Activated naive CD8-positive, alpha-beta T cell treated with anti-CD3 and anti-CD28 coated beads, Interleukin-2, amount 10 ng/mL, durations not matched to agents 7 days and 5 days (primary cell): ENCODE measurements at regions of chr10 and their contacts with region 1.

Region 1: DNA sequence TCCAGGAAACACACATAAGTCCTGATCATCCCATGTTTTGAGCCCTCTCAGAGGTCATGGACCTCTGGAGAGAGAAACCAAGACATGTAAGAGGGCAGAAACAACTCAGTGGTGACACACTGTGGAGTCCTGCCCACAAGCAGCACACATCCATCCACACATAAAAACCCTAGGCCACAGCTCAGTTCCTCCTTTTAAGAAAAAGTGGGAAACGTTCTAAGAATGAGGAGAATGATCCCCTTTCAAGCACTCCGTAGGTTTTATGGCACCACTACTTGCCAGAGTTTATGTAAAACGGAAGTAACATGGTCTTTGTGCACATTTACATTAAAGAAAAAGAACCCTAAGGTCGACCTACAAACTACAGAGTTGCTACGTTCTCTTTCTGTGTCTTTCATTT is 19.9 kb downstream of the ATAD1 start:
- DNase-seq: no peak
- ATAC-seq: no peak
- H3K4me3 Mint-ChIP-seq: no peak overlapping the region
- H3K27ac Mint-ChIP-seq: peak overlapping the region; percentile 11
- H3K4me1 Mint-ChIP-seq: peaks cover 18% of the 10 kb centered on the region
- H3K27me3 Mint-ChIP-seq: no peaks in the 10 kb centered on the region

Region 2: GRCh38 chr10:87733081-87733480 is 65.0 kb before region 1 on chr10:
- POLR2A ChIA-PET with region 1: no interaction called
- DNase-seq: no peak
- ATAC-seq: no peak
- H3K4me3 Mint-ChIP-seq: no peak overlapping the region
- H3K27ac Mint-ChIP-seq: no peak overlapping the region
- H3K4me1 Mint-ChIP-seq: peaks cover 6% of the 10 kb centered on the region
- H3K27me3 Mint-ChIP-seq: peaks cover 37% of the 10 kb centered on the region

Region 3: GRCh38 chr10:87817609-87818504 is 19.8 kb after region 1 on chr10 and contains the start of gene ATAD1:
- POLR2A ChIA-PET with region 1: interaction called, 11 read pairs
- DNase-seq: peak; percentile 92
- ATAC-seq: peak; percentile 93
- H3K4me3 Mint-ChIP-seq: peak within 1 kb of the TSS; percentile 89
- H3K27ac Mint-ChIP-seq: peak within 1 kb of the TSS; percentile 95
- H3K4me1 Mint-ChIP-seq: peaks cover 30% of the 10 kb centered on the region
- H3K27me3 Mint-ChIP-seq: no peaks in the 10 kb centered on the region
- total RNA-seq, gene ATAD1: 45.7 to 45.9 TPM